ENCODE measurements at regions of chr9 and their contacts with region 1.

Region 1: GRCh38 chr9:83937911-83938323 is 16.7 kb upstream of the KIF27 start:
- DNase-seq: peak; percentile 38 to 39
- H3K4me3 ChIP-seq: no peak overlapping the region
- H3K27ac ChIP-seq: no peak overlapping the region
- H3K4me1 ChIP-seq: peaks cover 30 to 34% of the 10 kb centered on the region in 2 donors
- H3K27me3 ChIP-seq: no peaks in the 10 kb centered on the region
- CTCF ChIP-seq: peak in 5 of 6 experiments; percentile 36 to 78 (median 68)
- POLR2A ChIP-seq: no peak

Region 2: GRCh38 chr9:83986765-83987401 is 49.0 kb after region 1 on chr9:
- intact Hi-C with region 1: no loop called
- DNase-seq: peak; percentile 51 to 66
- H3K4me3 ChIP-seq: no peak overlapping the region
- H3K27ac ChIP-seq: no peak overlapping the region
- H3K4me1 ChIP-seq: peaks cover 3 to 7% of the 10 kb centered on the region in 2 donors
- H3K27me3 ChIP-seq: no peaks in the 10 kb centered on the region
- CTCF ChIP-seq: no peak
- POLR2A ChIP-seq: no peak

Region 3: DNA sequence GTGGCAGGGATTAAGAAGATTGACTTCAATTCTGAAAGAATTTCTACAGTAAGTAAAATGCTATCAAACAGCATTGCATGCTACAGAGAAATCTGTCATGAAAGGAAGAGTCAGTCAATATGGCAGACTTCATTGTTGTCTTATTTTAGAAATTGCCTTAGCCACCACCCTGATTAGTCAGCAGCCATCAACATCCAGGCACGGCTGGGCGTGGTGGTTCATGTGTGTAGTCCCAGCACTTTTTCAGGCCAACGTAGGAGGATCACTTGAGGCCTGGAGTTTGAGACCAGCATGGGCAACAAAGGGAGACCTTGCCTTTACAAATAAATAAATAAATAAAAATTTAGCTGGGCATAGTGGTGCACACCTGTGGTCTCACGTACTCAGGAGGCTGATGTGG is 89.3 kb after region 1 on chr9:
- intact Hi-C with region 1: no loop called
- DNase-seq: no peak
- H3K4me3 ChIP-seq: no peak overlapping the region
- H3K27ac ChIP-seq: no peak overlapping the region
- H3K4me1 ChIP-seq: no peaks in the 10 kb centered on the region
- H3K27me3 ChIP-seq: no peaks in the 10 kb centered on the region
- CTCF ChIP-seq: no peak
- POLR2A ChIP-seq: no peak

Region 4: DNA sequence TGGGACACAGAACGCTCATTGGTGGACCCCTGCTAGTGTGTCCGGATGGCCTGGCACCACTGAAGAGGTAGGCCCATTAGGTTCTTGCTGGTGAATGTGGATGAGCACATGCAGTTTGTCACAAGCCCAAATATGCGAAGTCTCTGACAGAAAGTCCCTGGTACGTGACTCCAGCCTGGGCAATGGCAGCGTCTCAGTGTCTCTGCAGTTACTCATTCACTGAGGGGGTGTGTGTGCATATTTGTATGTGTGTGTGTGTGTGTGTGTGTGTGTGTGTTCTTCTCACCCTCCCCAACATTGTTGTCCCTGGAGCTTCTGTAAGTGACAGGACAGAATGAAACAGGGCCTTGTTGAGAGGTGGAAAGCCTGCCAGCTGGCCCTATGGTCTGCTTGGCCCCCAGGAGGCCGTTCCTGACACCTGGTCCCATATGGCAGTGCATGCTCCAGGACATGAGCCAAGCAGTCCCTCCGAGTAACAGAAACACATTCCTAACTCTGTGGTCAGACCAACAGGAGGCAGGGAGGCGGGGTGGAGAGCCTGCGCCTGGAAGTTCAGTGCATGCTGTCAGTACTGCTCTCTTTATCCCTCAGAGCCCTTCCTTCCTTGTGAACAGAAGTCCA is 232.7 kb after region 1 on chr9:
- intact Hi-C with region 1: loop called (anchors 10 kb)
- DNase-seq: peak; percentile 67
- H3K4me3 ChIP-seq: no peak overlapping the region
- H3K27ac ChIP-seq: no peak overlapping the region
- H3K4me1 ChIP-seq: peaks cover 0 to 23% of the 10 kb centered on the region in 2 donors
- H3K27me3 ChIP-seq: no peaks in the 10 kb centered on the region
- CTCF ChIP-seq: peak in 2 of 6 experiments; percentile 6 to 26
- POLR2A ChIP-seq: no peak

Region 5: DNA sequence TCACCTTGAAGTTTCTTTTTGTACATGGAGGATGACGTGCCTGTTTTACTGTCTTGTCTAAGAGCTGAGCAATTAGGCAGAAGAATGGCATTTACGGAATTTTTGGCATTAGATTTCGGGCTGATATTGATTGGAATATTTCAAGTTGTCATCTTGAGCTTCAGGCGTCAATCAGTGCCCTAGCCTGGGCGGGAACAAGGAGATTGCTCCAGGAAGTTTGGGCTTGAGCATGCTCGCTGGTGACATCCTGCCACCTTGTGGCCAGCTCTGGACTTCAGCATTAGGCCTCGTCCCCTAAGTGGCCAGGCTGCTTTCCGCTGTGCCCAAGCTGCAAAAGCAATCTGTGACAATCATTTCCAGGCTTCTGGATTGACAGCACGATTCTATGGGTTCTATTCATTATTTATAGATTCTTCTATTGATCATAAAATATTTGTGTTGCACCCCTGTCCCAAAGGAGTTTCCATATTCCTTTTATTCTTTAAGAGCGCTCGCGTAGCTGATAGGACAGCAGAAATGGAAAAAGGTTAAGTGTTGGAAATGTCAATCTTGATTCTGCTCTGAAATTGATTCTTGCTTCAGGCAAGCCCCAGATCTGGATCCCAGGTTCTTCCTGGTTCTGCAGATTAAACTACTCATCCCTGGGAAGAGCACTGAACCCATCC is 323.3 kb after region 1 on chr9:
- intact Hi-C with region 1: loop called (anchors 5 kb)
- DNase-seq: peak; percentile 91 to 93
- H3K4me3 ChIP-seq: no peak overlapping the region
- H3K27ac ChIP-seq: no peak overlapping the region
- H3K4me1 ChIP-seq: peaks cover 4 to 6% of the 10 kb centered on the region in 2 donors
- H3K27me3 ChIP-seq: no peaks in the 10 kb centered on the region
- CTCF ChIP-seq: peak; percentile 76 to 94 (median 90)
- POLR2A ChIP-seq: no peak

Region 6: DNA sequence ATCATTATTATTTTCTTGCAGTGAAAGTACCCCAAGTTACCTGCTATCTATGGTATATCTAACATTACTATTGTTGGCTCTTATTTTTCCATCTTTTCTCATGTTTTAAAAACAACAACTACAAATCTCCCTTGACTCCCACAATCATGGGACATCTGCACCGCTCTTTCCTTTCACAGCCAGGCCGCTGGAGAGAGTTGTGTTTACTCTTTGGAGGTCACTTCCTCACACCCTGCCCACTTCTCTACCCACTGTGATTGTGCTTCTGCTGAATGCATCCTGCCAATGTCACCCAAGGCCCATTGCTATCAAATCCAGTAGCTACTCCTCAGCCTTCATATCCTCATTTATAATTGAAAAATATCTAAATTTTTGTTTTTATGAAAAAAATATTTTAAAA is 373.0 kb after region 1 on chr9:
- intact Hi-C with region 1: loop called (anchors 5 kb)
- DNase-seq: no peak
- H3K4me3 ChIP-seq: no peak overlapping the region
- H3K27ac ChIP-seq: no peak overlapping the region
- H3K4me1 ChIP-seq: no peaks in the 10 kb centered on the region
- H3K27me3 ChIP-seq: no peaks in the 10 kb centered on the region
- CTCF ChIP-seq: no peak
- POLR2A ChIP-seq: no peak